ENCODE measurements at regions of chr11 and their contacts with region 1.

Region 1: GRCh38 chr11:128831174-128832120 is 35.6 kb downstream of the KCNJ1 start:
- DNase-seq: peak; percentile 42
- H3K4me3 ChIP-seq: no peak overlapping the region
- CTCF ChIP-seq: peak; percentile 82

Region 2: DNA sequence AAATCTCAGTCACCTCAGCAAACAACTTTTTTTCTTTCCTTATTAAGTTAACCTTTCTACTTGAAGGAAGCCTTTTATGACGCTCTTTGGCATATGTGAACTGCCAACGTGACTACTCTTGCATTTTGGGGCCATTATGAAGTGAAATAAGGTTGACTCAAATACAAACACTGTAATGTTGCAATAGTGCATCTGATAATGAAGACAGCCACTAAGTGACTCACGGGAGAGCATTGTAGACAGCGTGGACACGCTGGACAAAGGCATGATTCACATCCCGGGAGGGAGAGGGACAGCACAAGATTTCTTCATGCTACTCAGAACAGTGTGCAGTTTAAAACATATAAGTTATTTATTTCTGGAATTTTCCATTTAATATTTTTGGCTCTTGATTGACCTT is 804.9 kb before region 1 on chr11:
- CTCF ChIA-PET with region 1: interaction called, 23 read pairs
- POLR2A ChIA-PET with region 1: no interaction called
- DNase-seq: peak; percentile 89
- H3K4me3 ChIP-seq: no peak overlapping the region
- CTCF ChIP-seq: no peak

Region 3: DNA sequence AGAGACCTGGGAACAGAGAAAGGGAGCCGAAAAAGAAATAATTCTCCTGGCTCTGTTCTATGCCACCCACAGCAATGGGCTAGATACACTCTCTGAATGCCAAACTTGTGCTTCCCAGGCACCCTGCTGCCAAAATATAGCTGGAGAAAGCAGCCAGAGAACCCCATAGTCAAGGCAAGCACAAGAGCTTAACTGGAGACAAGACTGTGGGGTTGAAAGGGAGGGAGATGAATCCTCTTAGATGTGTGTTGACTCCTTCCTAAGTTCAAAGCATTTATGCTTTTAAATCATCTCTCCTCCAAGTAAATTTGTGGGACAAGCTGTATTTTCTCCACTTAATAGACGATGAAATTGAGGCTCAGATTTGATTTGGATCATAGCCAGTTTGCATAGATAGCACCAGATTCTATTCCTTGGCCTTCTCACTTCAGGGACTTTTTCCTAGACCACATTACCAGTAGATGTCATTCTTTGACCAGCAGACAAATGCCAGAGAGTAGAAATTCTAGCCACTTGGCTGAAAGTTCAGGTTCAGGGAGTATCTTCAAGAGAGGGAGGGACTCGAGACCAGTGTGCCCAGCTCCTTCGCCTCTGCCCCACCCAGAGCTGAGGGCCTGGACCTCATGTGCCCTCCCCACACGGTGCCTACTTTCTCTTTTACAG is 227.6 kb before region 1 on chr11:
- CTCF ChIA-PET with region 1: interaction called, 14 read pairs
- POLR2A ChIA-PET with region 1: no interaction called
- DNase-seq: no peak
- H3K4me3 ChIP-seq: no peak overlapping the region
- CTCF ChIP-seq: no peak

Region 4: GRCh38 chr11:128653801-128654231 is 177.6 kb before region 1 on chr11:
- CTCF ChIA-PET with region 1: interaction called, 21 read pairs
- POLR2A ChIA-PET with region 1: no interaction called
- DNase-seq: peak; percentile 51
- H3K4me3 ChIP-seq: no peak overlapping the region
- CTCF ChIP-seq: no peak

Region 5: GRCh38 chr11:128695539-128696221 is 135.8 kb before region 1 on chr11:
- CTCF ChIA-PET with region 1: interaction called, 11 read pairs
- POLR2A ChIA-PET with region 1: no interaction called
- DNase-seq: no peak
- H3K4me3 ChIP-seq: peak overlapping the region; percentile 76
- CTCF ChIP-seq: no peak

Region 6: GRCh38 chr11:128814856-128815705 is 16.4 kb before region 1 on chr11:
- CTCF ChIA-PET with region 1: interaction called, 45 read pairs
- POLR2A ChIA-PET with region 1: no interaction called
- DNase-seq: peak; percentile 85
- H3K4me3 ChIP-seq: no peak overlapping the region
- CTCF ChIP-seq: no peak

Region 7: GRCh38 chr11:128981254-128981653 is 149.8 kb after region 1 on chr11:
- CTCF ChIA-PET with region 1: no interaction called
- POLR2A ChIA-PET with region 1: no interaction called
- DNase-seq: no peak
- H3K4me3 ChIP-seq: no peak overlapping the region
- CTCF ChIP-seq: no peak